H1 (cell line): ENCODE measurements at regions of chr5 and their contacts with region 1.

Region 1: DNA sequence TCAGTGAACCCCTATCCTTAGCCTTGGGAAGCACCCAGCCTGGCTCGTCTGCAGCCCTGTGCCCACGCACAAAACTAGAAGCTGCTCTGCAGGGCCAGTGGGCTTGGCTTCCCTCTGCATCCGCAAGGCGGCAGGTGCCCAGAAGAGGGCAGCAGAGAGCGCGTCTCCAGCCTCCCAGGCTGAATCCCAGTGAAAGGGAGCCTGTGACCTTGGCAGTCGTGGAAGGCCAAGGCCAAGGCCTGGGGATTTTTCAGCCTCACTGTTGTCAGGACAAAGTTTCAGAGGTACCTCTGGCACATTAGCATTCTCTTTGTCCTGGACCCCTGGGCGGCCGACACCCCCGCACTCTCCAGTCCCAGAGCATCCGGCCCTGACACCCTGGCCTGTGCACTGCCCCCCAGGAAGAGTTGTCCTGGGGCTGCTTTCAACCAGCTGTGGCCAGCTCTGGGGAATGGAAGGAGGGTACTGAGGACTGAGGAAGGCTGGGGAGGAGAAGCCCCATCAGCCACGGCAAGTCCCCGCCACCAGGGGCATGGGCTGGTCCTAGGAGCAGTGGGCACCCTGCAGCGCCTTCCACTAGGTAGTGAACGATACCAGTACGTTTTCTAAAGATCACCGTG is 63.6 kb upstream of the IL17B start:
- DNase-seq: peak; percentile 61 to 99
- H3K4me3 ChIP-seq: no peak overlapping the region
- H3K27ac ChIP-seq: peak overlapping the region; percentile 38; the same call in 1 of the 2 replicates
- H3K4me1 ChIP-seq: peaks cover 0 to 17% (median 9%) of the 10 kb centered on the region in 4 experiments; a peak in 6 of 7 replicates
- H3K27me3 ChIP-seq: no peaks in the 10 kb centered on the region
- CTCF ChIP-seq: peak; percentile 92 to 96 (median 96)
- EP300 ChIP-seq: no peak
- POLR2A ChIP-seq: no peak
- RAD21 ChIP-seq: peak; percentile 79 to 86

Region 2: DNA sequence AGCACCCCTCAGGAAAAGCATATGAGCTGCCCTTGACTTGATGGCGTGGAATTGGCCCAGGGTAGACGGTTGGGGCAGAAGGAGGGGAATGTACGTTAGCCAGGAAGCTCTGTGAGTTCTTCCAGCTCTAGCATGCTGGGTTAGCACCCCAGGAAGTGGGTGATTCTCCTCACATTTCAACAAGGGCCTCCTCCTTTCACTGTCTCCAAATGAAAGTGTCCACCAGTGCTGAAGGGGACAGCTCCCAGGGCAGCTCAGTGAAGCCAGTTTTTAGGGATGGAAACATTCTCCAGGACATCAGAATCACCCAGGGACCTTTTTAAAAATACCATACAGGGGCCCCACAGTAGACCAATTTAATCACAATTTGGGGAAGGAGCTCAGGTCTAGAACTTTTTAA is 188.2 kb before region 1 on chr5:
- CTCF ChIA-PET with region 1: no interaction called
- POLR2A ChIA-PET with region 1: no interaction called
- DNase-seq: peak in 1 of 2 experiments; percentile 52
- H3K4me3 ChIP-seq: no peak overlapping the region
- H3K27ac ChIP-seq: no peak overlapping the region
- H3K4me1 ChIP-seq: no peaks in the 10 kb centered on the region; a peak in 1 of 7 replicates
- H3K27me3 ChIP-seq: 0 out of 7 replicates have a peak, but pooled peaks cover 0 to 2% (median 0%) of the 10 kb centered on the region in 4 experiments
- CTCF ChIP-seq: no peak
- EP300 ChIP-seq: no peak
- POLR2A ChIP-seq: no peak
- RAD21 ChIP-seq: no peak

Region 3: GRCh38 chr5:149357370-149358293 is 85.0 kb before region 1 on chr5 and contains the start of gene PCYOX1L:
- CTCF ChIA-PET with region 1: interaction called, 1,310 read pairs
- POLR2A ChIA-PET with region 1: no interaction called
- DNase-seq: peak; percentile 87 to 99
- H3K4me3 ChIP-seq: peak within 1 kb of the TSS; percentile 68 to 87 (median 76)
- H3K27ac ChIP-seq: no peak within 1 kb of the TSS
- H3K4me1 ChIP-seq: peaks cover 0 to 6% (median 2%) of the 10 kb centered on the region in 4 experiments; a peak in 5 of 7 replicates
- H3K27me3 ChIP-seq: no peaks in the 10 kb centered on the region; a peak in 1 of 7 replicates
- CTCF ChIP-seq: 0 out of 4 replicates have a peak, but pooled peaks of 1 of the 3 experiments have one; percentile 0
- EP300 ChIP-seq: peak in 1 of 2 experiments; percentile 18; a peak in 1 of 3 replicates
- POLR2A ChIP-seq: peak in 1 of 2 experiments; percentile 77; a peak in 2 of 3 replicates
- RAD21 ChIP-seq: no peak
- total RNA-seq, gene PCYOX1L: 6.8 and 7.9 TPM in 2 replicates

Region 4: DNA sequence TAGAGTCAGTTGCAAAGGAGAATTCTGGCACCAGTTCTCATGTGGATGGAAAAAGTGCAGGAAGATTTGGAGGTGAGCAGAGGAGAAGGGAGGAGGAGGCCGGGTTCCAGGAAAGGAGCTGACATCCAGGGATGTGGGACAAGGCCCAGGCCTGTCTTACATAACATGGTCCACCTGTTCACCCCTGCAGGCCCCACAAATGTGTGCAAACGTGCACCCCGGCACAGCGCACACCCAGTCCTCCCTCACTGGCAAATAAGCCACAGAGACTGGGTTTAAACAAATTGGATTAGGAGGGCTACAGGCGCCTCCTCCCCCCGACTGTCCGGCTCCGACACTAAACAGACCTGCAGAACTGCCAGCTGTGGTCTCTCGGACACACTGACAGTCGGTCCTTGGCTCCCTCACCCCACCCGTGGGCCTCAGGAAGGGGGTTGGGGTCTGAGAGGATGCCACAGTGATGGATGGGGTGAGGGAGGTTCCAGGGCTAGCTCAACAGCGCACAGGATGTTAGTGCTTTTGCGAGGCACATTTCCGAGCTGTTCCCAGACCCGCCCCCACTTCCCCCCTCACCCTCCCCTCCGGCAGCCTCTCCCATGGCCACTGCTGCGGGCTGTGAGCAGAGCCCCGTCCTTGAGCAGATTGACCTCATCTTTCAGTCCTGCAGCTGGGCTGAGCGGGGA is 20.2 kb before region 1 on chr5:
- CTCF ChIA-PET with region 1: interaction called, 315 read pairs
- POLR2A ChIA-PET with region 1: interaction called, 4 read pairs
- DNase-seq: no peak
- H3K4me3 ChIP-seq: no peak overlapping the region
- H3K27ac ChIP-seq: no peak overlapping the region
- H3K4me1 ChIP-seq: peaks cover 13 to 33% (median 20%) of the 10 kb centered on the region in 4 experiments
- H3K27me3 ChIP-seq: no peaks in the 10 kb centered on the region
- CTCF ChIP-seq: no peak
- EP300 ChIP-seq: peak in 1 of 2 experiments; percentile 22; a peak in 1 of 3 replicates
- POLR2A ChIP-seq: no peak
- RAD21 ChIP-seq: no peak

Region 5: DNA sequence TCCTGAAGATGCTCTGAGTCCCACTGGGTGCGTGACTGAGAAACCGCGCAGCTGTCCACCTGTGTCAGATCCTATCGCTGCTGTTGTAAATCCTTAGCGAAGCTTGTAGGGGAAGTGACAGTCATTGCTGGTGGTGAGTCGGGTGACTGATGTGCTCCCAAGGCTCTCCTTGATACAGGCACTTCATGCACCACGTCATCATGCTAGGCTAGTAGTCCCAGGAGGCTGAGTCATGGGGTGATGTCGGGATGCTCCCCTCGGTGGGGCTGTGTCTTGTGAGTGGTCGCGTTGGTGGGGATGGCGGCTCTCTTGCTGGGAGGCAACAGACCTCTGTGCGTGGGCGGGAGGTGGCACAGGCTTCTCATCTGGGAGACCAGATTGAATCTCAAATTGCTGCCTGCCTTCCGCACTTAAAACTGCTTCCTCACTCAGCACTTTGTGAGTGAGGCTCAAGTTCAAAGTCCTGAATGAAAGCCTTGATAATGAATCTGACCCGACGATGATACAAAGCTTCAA is 23.8 kb after region 1 on chr5:
- CTCF ChIA-PET with region 1: interaction called, 25 read pairs
- POLR2A ChIA-PET with region 1: no interaction called
- DNase-seq: no peak
- H3K4me3 ChIP-seq: no peak overlapping the region
- H3K27ac ChIP-seq: no peak overlapping the region
- H3K4me1 ChIP-seq: 0 out of 7 replicates have a peak, but pooled peaks cover 0 to 2% (median 0%) of the 10 kb centered on the region in 4 experiments
- H3K27me3 ChIP-seq: no peaks in the 10 kb centered on the region
- CTCF ChIP-seq: no peak
- EP300 ChIP-seq: no peak
- POLR2A ChIP-seq: no peak
- RAD21 ChIP-seq: no peak

Region 6: GRCh38 chr5:149485655-149486425 is 43.2 kb after region 1 on chr5:
- CTCF ChIA-PET with region 1: interaction called, 12 read pairs
- POLR2A ChIA-PET with region 1: interaction called, 7 read pairs
- DNase-seq: no peak
- H3K4me3 ChIP-seq: no peak overlapping the region
- H3K27ac ChIP-seq: no peak overlapping the region
- H3K4me1 ChIP-seq: no peaks in the 10 kb centered on the region
- H3K27me3 ChIP-seq: no peaks in the 10 kb centered on the region
- CTCF ChIP-seq: no peak
- EP300 ChIP-seq: no peak
- POLR2A ChIP-seq: no peak
- RAD21 ChIP-seq: no peak

Region 7: DNA sequence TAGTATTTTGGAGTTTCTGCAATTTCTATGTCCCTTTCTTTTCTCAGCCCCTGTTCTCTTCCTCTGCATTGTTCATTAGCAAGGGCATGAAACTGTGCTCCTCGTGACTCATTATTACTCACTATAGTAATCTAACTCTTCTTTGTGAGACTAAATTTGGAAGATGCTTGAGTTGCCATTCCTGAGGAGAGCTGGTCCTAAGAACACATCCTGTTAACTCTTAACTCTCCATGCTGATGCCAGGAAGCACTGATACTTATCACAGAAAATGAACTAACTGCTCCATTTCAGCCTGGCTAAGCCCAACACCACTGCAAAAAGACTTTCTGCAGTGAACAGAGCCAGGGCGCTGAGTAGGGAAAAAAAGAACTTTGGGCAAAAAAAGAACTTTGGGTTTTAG is 119.2 kb after region 1 on chr5:
- CTCF ChIA-PET with region 1: interaction called, 174 read pairs
- POLR2A ChIA-PET with region 1: interaction called, 4 read pairs
- DNase-seq: no peak
- H3K4me3 ChIP-seq: no peak overlapping the region
- H3K27ac ChIP-seq: peak overlapping the region; percentile 51; the same call in 1 of the 2 replicates
- H3K4me1 ChIP-seq: peaks cover 5 to 12% (median 7%) of the 10 kb centered on the region in 4 experiments; a peak in 6 of 7 replicates
- H3K27me3 ChIP-seq: no peaks in the 10 kb centered on the region
- CTCF ChIP-seq: no peak
- EP300 ChIP-seq: no peak
- POLR2A ChIP-seq: no peak
- RAD21 ChIP-seq: no peak